KBM-7 (cell line): ENCODE measurements at regions of chr12 and their contacts with region 1.

Region 1: DNA sequence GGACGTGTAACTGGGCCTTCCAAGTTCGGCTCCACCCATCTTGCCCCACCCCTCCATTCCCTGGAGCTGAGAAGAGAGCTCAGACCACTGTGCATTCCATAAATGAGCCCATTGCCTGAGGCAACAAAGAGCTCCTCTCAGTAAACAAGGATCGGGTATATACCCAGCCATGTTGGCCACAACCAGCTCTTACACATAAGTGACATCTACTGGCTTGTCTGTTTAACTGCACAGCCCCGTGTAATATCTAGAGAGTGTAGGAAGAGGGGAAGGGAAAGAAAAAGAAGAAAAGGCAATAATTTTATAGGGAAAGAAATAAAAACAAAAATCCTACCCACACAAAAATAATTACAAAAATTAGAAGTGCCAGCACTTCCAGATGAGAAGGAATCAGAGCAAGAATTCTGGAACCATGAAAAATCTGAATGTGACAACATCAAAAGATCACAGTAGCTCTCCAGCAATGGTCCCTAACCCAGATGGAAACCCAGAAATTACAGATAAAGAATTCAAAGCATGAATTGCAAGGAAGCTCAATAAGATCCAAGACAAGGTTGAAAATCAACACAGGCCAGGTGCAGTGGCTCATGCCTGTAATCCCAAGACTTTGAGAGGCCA is 308.1 kb downstream of the RPAP3 start:
- DNase-seq: peak; percentile 69

Region 2: DNA sequence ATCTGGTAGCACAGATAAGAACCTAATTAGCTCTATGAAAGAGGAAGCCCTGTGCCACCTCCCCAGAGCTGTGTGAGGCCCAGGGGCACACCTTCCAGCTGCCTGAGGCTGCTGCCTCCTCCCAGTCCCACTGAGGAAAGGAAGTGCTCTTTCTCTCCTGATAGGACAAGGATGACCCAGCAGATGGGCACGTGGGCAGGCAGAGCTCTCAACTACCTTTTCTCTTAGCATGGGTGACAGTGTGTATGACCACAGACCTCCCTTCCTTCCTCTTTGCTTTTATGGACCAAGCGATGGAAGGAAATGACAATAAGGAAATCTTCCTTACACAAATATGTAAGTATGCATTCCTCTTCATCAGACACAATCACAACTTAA is 190.4 kb before region 1 on chr12:
- in situ Hi-C with region 1: loop called (anchors 25 kb)
- DNase-seq: peak; percentile 99